ENCODE measurements at regions of chr20 and their contacts with region 1.

Region 1: GRCh38 chr20:47487175-47487917 is 14.3 kb upstream of the NCOA3 start:
- DNase-seq: peak; percentile 68
- H3K4me3 Mint-ChIP-seq: peak overlapping the region; percentile 47
- H3K27ac Mint-ChIP-seq: peak overlapping the region; percentile 98
- H3K4me1 Mint-ChIP-seq: peaks cover 75% of the 10 kb centered on the region
- H3K27me3 Mint-ChIP-seq: no peaks in the 10 kb centered on the region

Region 2: DNA sequence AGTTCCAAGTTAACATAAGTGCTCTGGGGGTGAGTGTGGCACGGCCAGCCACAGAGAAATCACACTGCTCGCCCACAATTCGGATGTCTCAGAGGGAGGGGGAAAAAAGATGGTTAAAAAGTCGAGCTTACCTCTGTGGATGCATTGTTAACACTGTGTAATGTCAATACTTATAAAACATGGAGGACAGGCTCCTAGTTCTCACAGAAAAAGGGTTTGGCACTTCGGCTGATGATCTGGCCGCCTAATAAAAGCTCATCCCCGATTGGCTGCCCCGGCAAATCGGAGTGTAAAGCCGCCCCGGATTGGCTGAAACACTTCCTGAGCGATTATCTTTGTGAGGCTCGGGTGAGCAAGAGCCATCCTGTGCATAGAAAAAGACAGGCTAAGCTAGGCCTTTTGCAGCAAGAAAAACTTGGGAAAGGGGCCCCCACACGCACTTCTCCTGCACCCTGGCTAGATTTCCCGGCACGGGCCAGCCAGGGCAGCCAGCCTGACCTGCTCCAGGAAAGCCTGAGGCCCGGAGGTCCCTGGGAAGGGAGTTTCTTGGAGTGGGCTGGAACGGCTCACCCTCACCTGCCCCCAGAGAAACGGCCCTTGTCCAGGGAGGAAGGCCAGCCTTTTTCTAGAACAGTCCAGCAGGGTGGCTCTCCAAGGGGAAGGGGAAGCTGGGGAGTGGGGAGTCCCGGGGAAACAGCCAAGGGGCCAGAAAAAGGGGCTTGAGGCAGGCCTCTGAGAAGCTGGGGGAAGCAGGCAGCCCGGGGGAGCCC is 130.6 kb before region 1 on chr20 and contains the start of gene ZMYND8:
- CTCF ChIA-PET with region 1: no interaction called
- POLR2A ChIA-PET with region 1: interaction called, 10 read pairs
- DNase-seq: peak; percentile 99
- H3K4me3 Mint-ChIP-seq: peak within 1 kb of the TSS; percentile 81
- H3K27ac Mint-ChIP-seq: peak within 1 kb of the TSS; percentile 94
- H3K4me1 Mint-ChIP-seq: peaks cover 24% of the 10 kb centered on the region
- H3K27me3 Mint-ChIP-seq: no peaks in the 10 kb centered on the region
- total RNA-seq, gene ZMYND8: 37.8 to 44.2 TPM

Region 3: DNA sequence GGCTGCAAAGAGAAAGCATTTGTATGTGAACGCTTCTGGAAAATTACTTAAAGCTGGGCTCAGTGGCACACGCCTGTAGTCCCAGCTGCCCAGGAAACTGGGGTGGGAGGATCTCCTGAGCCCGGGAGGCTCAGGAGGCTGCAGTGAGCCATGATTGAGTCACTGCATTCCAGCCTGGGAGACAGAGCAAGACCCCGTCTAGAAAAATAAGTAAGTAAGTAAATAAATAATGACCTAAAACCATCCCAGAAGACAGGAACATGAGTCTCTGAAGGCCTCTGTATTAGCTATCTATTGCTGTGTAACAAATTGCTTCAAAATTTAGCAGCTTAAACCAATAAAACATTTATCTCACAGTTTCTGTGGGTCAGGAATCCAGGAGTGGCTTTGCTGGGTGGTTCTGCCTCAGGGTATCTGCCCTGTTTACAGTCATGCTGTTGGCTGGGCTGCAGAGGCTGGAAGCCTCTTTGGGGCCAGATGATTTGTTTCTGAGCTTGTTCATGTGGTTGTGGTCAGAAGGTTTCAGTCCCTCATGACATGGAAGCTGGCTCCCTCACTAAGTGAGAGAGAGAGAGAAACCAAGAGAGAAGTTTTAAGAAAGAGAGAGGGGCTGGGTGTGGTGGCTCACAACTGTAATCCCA is 34.1 kb before region 1 on chr20:
- CTCF ChIA-PET with region 1: interaction called, 3 read pairs
- POLR2A ChIA-PET with region 1: interaction called, 11 read pairs
- DNase-seq: peak; percentile 68
- H3K4me3 Mint-ChIP-seq: no peak overlapping the region
- H3K27ac Mint-ChIP-seq: peak overlapping the region; percentile 73
- H3K4me1 Mint-ChIP-seq: peaks cover 44% of the 10 kb centered on the region
- H3K27me3 Mint-ChIP-seq: no peaks in the 10 kb centered on the region

Region 4: DNA sequence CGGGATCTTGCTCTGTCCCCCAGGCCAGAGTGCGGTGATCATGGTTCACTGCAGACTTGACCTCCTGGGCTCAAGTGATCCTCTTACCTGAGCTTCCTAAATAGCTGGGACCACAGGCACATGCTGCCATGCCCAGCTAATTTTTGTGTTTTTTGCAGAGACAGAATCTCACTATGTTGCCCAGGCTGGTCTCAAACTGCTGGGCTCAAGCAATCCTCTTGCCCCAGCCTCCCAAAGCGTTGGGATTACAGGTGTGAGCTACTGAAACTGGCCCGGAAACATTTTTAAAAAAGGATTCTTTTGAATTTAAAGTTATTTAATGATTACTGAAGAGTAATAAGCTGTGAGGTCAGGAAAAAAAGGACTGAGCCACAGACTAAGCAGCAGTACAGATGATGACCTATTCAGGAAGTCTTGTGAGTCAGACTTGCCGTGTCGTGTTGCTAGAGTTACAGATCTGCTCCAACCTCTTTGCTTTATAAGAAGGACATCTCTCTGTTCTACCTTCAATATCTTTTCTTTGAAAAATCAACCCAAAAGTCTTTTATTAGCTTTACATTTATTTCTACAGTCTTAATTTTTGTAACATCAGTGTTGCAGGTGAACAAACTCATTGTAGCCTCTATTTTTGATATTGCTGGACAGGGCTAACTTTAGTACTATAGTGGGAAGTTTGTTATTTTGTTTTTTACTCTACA is 123.0 kb after region 1 on chr20:
- CTCF ChIA-PET with region 1: interaction called, 4 read pairs
- POLR2A ChIA-PET with region 1: interaction called, 22 read pairs
- DNase-seq: peak; percentile 85
- H3K4me3 Mint-ChIP-seq: peak overlapping the region; percentile 54
- H3K27ac Mint-ChIP-seq: peak overlapping the region; percentile 85
- H3K4me1 Mint-ChIP-seq: peaks cover 71% of the 10 kb centered on the region
- H3K27me3 Mint-ChIP-seq: no peaks in the 10 kb centered on the region